ENCODE measurements at regions of chr1 and their contacts with region 1.

Region 1: DNA sequence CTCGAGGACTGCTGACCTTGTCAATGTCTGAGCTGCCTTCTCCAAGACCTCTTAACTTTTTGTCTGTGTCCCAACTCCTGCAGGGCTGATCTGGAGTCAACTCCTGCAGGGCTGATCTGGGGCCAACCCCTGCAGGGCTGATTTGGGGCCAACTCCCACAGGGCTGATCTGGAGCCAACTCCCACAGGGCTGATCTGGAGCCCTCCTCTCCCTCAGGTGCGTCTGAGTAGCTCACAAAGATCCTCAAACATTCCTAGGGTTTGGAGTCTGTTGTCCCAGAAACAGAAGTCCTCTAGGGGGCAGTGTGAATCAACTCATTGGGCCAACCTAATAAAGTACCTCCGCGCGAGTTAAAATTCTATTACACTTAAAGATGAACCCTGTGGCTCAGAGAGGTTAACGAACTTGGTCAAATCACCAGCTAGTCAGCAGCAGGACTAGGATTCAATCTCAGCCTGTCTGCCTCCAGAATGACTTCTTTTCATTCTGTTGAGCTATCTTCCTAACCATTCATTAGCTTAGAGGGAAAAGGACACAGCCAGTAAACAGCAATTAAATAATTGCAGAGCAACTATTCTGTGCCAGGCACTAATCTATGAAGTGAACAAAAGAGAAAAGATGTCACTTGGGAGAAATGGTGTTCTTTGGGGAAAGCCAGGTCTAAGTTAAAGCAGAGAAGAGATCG is 17.2 kb upstream of the RLF start:
- DNase-seq: peak in 4 of 6 donors; percentile 30 to 69 (median 50)
- ATAC-seq: peak; percentile 85 to 98 (median 92)
- H3K4me3 ChIP-seq: no peak overlapping the region
- H3K27ac ChIP-seq: no peak overlapping the region
- H3K4me1 ChIP-seq: no peaks in the 10 kb centered on the region
- H3K27me3 ChIP-seq: no peaks in the 10 kb centered on the region
- CTCF ChIP-seq: peak; percentile 56 to 71 (median 66)

Region 2: GRCh38 chr1:40315239-40315794 is 171.3 kb after region 1 on chr1:
- intact Hi-C with region 1: no loop called
- DNase-seq: peak; percentile 65 to 86 (median 76)
- ATAC-seq: peak; percentile 73 to 91 (median 87)
- H3K4me3 ChIP-seq: peak overlapping the region in 3 of 4 donors; percentile 18 to 56 (median 40)
- H3K27ac ChIP-seq: no peak overlapping the region
- H3K4me1 ChIP-seq: no peaks in the 10 kb centered on the region
- H3K27me3 ChIP-seq: peaks cover 0 to 10% (median 0%) of the 10 kb centered on the region in 4 donors
- CTCF ChIP-seq: peak; percentile 81 to 89 (median 85)

Region 3: DNA sequence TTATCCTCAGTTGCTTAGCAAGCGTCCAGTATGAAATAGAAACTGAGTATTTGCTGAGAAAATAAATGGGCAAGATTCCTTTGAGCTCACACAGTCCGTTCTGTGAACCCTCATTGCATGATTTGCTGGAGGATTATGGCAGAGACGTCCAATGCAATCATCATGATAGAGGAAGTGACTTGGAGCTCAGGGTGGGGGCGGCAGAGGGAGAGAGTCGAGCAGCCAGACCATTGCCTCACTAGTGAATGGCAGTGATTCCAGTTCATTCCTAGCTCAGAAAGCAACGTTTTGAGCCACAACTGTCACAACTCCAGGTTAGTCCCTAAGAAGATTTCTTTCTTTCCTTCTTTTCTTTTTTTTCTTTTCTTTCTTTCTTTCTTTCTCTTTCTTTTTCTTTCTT is 200.6 kb after region 1 on chr1:
- intact Hi-C with region 1: loop called in 2 of 3 experiments (anchors 5 to 10 kb)
- DNase-seq: peak in 1 of 6 donors; percentile 23
- ATAC-seq: peak in 3 of 4 donors; percentile 56 to 82 (median 78)
- H3K4me3 ChIP-seq: no peak overlapping the region
- H3K27ac ChIP-seq: no peak overlapping the region
- H3K4me1 ChIP-seq: no peaks in the 10 kb centered on the region
- H3K27me3 ChIP-seq: no peaks in the 10 kb centered on the region
- CTCF ChIP-seq: no peak

Region 4: DNA sequence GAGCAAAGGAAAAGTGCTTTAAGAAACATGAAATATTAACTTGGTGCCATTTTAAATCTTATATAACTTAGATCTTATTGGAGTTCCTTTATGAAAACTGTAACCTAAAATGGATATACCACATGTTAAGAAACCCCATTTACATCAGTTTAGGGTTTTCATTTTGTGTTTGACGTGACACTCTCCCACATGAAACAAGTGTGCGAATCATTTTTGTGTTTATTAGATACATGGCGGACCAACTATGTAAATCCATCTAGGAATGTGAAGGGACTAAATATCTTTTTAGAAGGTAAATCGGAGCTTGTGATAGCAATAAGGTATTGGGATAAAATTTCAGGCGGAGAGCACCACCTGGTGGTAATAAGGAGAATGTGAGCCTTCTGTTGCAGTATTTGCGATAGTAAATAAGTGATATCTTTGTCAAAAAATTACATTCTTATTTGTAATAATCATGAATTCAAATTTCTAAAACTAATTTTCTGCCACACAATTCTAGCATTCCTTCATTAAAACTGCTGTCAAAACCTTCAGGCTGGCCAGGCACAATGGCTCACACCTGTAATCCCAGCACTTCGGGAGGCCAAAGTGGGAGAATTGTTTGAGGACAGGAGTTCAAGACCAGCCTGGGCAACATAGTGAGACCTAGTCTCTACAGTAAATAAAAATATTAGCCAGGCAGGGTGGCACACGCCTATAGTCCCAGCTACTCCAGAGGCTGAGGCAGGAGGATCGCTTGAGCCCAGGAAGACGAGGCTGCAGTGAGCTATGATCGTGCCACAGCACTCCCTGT is 260.8 kb after region 1 on chr1:
- intact Hi-C with region 1: loop called in 1 of 3 experiments (anchors 5 kb)
- DNase-seq: no peak
- ATAC-seq: peak; percentile 72 to 91 (median 88)
- H3K4me3 ChIP-seq: no peak overlapping the region
- H3K27ac ChIP-seq: no peak overlapping the region
- H3K4me1 ChIP-seq: peaks cover 0 to 13% (median 9%) of the 10 kb centered on the region in 3 donors
- H3K27me3 ChIP-seq: no peaks in the 10 kb centered on the region
- CTCF ChIP-seq: peak; percentile 56 to 83 (median 70)